Activated CD4-positive, alpha-beta memory T cell treated with anti-CD3 and anti-CD28 coated beads for 36 hours (primary cell): ENCODE measurements at regions of chr5 and their contacts with region 1.

Region 1: GRCh38 chr5:173887610-173888472 is at the start of gene CPEB4:
- DNase-seq: peak; percentile 98
- H3K4me3 Mint-ChIP-seq: peak within 1 kb of the TSS; percentile 97
- H3K27ac Mint-ChIP-seq: peak within 1 kb of the TSS; percentile 97
- H3K4me1 Mint-ChIP-seq: peaks cover 72% of the 10 kb centered on the region
- H3K27me3 Mint-ChIP-seq: no peaks in the 10 kb centered on the region
- total RNA-seq, gene CPEB4: 11.4 to 11.9 TPM

Region 2: GRCh38 chr5:173057062-173057924 is 830.5 kb before region 1 on chr5:
- CTCF ChIA-PET with region 1: no interaction called
- POLR2A ChIA-PET with region 1: no interaction called
- intact Hi-C with region 1: loop called (anchors 5 kb)
- DNase-seq: peak; percentile 100
- H3K4me3 Mint-ChIP-seq: peak overlapping the region; percentile 97
- H3K27ac Mint-ChIP-seq: peak overlapping the region; percentile 97
- H3K4me1 Mint-ChIP-seq: peaks cover 44% of the 10 kb centered on the region
- H3K27me3 Mint-ChIP-seq: no peaks in the 10 kb centered on the region

Region 3: GRCh38 chr5:173781814-173782670 is 105.8 kb before region 1 on chr5:
- CTCF ChIA-PET with region 1: no interaction called
- POLR2A ChIA-PET with region 1: no interaction called
- intact Hi-C with region 1: loop called (anchors 5 kb)
- DNase-seq: peak; percentile 79
- H3K4me3 Mint-ChIP-seq: peak overlapping the region; percentile 30
- H3K27ac Mint-ChIP-seq: peak overlapping the region; percentile 93
- H3K4me1 Mint-ChIP-seq: peaks cover 33% of the 10 kb centered on the region
- H3K27me3 Mint-ChIP-seq: no peaks in the 10 kb centered on the region

Region 4: DNA sequence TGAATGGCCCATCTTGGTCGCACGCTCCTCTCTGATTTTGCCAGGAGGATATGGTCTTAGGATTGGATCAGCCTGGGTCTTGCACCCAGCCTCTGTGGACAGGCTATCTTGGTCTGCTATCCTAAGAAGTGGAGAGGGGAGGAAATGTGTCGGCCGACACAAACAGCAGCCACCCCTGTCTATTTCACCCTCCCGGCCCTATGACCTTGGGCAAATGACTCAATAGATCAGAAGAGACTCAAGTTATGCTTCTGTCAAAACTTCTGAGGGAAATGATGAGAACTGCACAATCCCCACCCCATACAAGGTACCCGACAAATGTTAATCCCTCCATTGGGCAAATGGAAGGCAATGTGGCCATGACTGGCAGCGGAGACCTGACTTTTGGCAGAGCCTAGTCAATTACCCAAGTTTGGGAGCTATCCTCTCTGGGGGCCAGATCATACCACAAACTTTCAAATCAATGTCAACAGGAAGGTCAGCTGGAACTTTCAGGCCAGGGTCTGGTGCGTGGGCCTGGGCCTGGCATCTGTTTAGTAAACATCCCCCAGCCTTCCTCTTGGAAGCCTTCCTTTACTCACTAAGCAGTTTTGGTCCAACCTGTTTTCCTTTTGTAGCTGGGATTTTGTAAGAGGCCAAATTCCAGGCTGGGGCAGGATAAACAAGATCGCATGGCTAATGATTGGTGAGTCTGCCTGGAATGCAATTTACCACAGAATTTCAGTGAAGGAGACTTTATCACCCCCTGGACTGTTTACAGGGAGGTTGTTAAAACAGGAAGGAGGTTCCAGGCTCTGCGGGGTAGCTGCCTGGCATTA is 63.9 kb before region 1 on chr5:
- CTCF ChIA-PET with region 1: no interaction called
- POLR2A ChIA-PET with region 1: no interaction called
- intact Hi-C with region 1: loop called (anchors 5 kb)
- DNase-seq: no peak
- H3K4me3 Mint-ChIP-seq: no peak overlapping the region
- H3K27ac Mint-ChIP-seq: no peak overlapping the region
- H3K4me1 Mint-ChIP-seq: peaks cover 13% of the 10 kb centered on the region
- H3K27me3 Mint-ChIP-seq: no peaks in the 10 kb centered on the region

Region 5: GRCh38 chr5:173868076-173868880 is 19.6 kb before region 1 on chr5:
- CTCF ChIA-PET with region 1: no interaction called
- POLR2A ChIA-PET with region 1: no interaction called
- intact Hi-C with region 1: no loop called
- DNase-seq: no peak
- H3K4me3 Mint-ChIP-seq: no peak overlapping the region
- H3K27ac Mint-ChIP-seq: no peak overlapping the region
- H3K4me1 Mint-ChIP-seq: no peaks in the 10 kb centered on the region
- H3K27me3 Mint-ChIP-seq: no peaks in the 10 kb centered on the region

Region 6: GRCh38 chr5:173917788-173918786 is 30.2 kb after region 1 on chr5:
- CTCF ChIA-PET with region 1: interaction called, 5 read pairs
- POLR2A ChIA-PET with region 1: interaction called, 7 read pairs
- intact Hi-C with region 1: loop called (anchors 1 kb)
- DNase-seq: peak; percentile 65
- H3K4me3 Mint-ChIP-seq: no peak overlapping the region
- H3K27ac Mint-ChIP-seq: no peak overlapping the region
- H3K4me1 Mint-ChIP-seq: peaks cover 6% of the 10 kb centered on the region
- H3K27me3 Mint-ChIP-seq: no peaks in the 10 kb centered on the region

Region 7: GRCh38 chr5:173925448-173926071 is 37.7 kb after region 1 on chr5:
- CTCF ChIA-PET with region 1: interaction called, 12 read pairs
- POLR2A ChIA-PET with region 1: no interaction called
- intact Hi-C with region 1: no loop called
- DNase-seq: peak; percentile 57
- H3K4me3 Mint-ChIP-seq: no peak overlapping the region
- H3K27ac Mint-ChIP-seq: no peak overlapping the region
- H3K4me1 Mint-ChIP-seq: peaks cover 15% of the 10 kb centered on the region
- H3K27me3 Mint-ChIP-seq: no peaks in the 10 kb centered on the region

Region 8: DNA sequence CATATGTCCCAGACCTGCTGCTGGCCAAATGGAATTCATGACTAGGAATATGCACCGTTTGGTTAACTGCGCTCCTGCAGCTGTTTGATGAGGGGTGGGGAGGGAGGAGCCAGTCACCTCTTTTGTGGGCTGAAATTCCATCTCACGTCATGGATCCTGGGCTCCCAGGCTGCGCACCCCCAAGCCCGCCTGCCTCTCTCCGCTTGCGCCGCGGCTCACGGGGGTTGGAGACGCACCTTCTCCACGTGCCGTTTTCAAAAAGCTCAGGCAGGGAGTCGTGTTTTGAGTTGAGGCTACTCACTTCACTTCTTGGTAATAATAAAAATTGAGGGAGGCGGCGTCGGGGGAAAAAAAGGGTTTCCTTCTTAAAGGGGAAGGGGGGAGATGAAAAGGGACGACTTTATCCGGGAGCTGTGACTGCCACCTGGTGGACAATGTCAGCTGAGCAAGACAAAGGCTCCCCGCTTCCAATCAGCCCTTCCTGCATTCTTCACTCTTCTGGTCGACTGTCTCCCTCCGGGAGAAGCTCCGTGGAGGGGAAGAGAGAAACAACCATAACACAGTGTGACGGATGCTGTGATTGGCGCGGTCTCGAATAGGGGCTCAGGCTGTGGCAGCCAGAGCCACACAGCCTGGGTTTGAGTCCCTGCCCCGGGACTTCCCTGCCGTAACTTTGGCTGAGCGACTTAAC is 85.2 kb after region 1 on chr5:
- CTCF ChIA-PET with region 1: interaction called, 4 read pairs
- POLR2A ChIA-PET with region 1: no interaction called
- intact Hi-C with region 1: loop called (anchors 5 kb)
- DNase-seq: peak; percentile 85
- H3K4me3 Mint-ChIP-seq: peak overlapping the region; percentile 68
- H3K27ac Mint-ChIP-seq: no peak overlapping the region
- H3K4me1 Mint-ChIP-seq: peaks cover 9% of the 10 kb centered on the region
- H3K27me3 Mint-ChIP-seq: peaks cover 4% of the 10 kb centered on the region